Pancreas (tissue), 10 donors: ENCODE measurements at regions of chr4 and their contacts with region 1.

Region 1: DNA sequence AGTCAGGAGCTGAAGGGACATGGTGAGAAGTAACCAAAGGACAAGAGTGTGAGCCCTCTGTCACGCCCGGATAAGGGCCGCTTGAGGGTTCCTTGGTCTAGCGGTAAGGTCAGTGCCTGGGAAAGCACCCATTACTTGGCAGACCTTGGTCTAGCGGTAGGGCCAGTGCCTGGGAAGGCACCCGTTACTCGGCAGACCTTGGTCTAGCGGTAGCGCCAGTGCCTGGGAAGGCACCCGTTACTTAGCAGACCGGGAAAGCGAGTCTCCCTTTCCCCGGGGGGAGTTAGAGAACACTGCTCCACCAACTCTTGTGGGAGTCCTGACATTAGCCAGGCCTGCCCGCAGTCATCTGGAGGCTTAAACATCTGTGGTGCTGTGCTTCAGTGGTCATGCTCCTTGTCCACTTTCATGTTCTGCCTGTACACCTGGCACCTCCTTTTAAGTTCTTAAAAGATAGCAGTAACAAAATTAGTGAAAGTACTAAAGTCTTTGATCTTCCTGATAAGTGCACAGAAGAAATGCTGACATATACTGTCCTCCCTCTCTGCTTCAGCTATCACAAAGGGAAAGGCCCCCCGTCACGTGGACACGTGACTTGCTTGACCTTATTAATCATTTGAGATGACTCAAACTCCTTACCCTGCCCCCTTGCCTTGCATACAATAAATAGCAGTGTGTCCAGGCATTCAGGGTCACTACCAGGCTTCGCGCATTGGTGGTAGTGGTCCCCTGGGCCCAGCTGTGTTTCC is 9.3 kb upstream of the SEC24B start:
- DNase-seq: no peak
- ATAC-seq: no peak
- H3K4me3 ChIP-seq: no peak overlapping the region
- H3K27ac ChIP-seq: no peak overlapping the region
- H3K4me1 ChIP-seq: no peaks in the 10 kb centered on the region
- H3K27me3 ChIP-seq: no peaks in the 10 kb centered on the region
- CTCF ChIP-seq: no peak

Region 2: GRCh38 chr4:109184491-109184961 is 239.7 kb before region 1 on chr4:
- intact Hi-C with region 1: no loop called
- DNase-seq: no peak
- ATAC-seq: peak in 1 of 4 donors; percentile 16
- H3K4me3 ChIP-seq: no peak overlapping the region
- H3K27ac ChIP-seq: no peak overlapping the region
- H3K4me1 ChIP-seq: no peaks in the 10 kb centered on the region
- H3K27me3 ChIP-seq: no peaks in the 10 kb centered on the region
- CTCF ChIP-seq: no peak

Region 3: GRCh38 chr4:109803924-109804571 is 379.8 kb after region 1 on chr4:
- intact Hi-C with region 1: loop called in 1 of 3 experiments (anchors 10 kb)
- DNase-seq: peak in 1 of 6 donors; percentile 22
- ATAC-seq: peak; percentile 54 to 81 (median 75)
- H3K4me3 ChIP-seq: no peak overlapping the region
- H3K27ac ChIP-seq: no peak overlapping the region
- H3K4me1 ChIP-seq: peaks cover 0 to 18% (median 15%) of the 10 kb centered on the region in 3 donors
- H3K27me3 ChIP-seq: no peaks in the 10 kb centered on the region
- CTCF ChIP-seq: peak in 2 of 4 donors; percentile 32 to 33

Region 4: DNA sequence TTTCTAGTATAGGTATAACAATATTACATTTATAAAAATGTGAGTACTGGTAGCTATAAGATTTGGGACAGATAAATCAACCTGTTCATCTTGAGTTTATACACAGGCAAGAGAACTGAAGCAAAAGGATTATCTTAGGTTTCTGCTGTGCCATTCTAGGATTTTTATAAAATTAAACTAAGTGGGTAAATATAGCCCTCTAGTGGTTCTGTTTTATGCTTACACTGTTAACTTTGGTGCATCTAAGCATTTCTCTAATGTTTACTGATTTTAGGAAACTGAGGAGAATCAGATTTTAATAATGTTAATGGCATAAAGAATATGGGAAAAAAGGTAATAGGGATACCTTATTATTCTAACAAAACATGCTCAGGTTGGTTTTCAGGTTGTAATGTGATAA is 402.5 kb after region 1 on chr4:
- intact Hi-C with region 1: loop called in 1 of 3 experiments (anchors 10 kb)
- DNase-seq: no peak
- ATAC-seq: peak; percentile 53 to 81 (median 80)
- H3K4me3 ChIP-seq: no peak overlapping the region
- H3K27ac ChIP-seq: no peak overlapping the region
- H3K4me1 ChIP-seq: no peaks in the 10 kb centered on the region
- H3K27me3 ChIP-seq: no peaks in the 10 kb centered on the region
- CTCF ChIP-seq: peak in 2 of 4 donors; percentile 43 to 44

Region 5: GRCh38 chr4:109977854-109978501 is 553.7 kb after region 1 on chr4:
- intact Hi-C with region 1: loop called in 2 of 3 experiments (anchors 10 kb)
- DNase-seq: no peak
- ATAC-seq: peak; percentile 56 to 80 (median 76)
- H3K4me3 ChIP-seq: no peak overlapping the region
- H3K27ac ChIP-seq: no peak overlapping the region
- H3K4me1 ChIP-seq: peaks cover 0 to 4% (median 0%) of the 10 kb centered on the region in 3 donors
- H3K27me3 ChIP-seq: no peaks in the 10 kb centered on the region
- CTCF ChIP-seq: peak; percentile 14 to 51 (median 46)